ENCODE measurements at regions of chr10 and their contacts with region 1.

Region 1: GRCh38 chr10:35119378-35119777 is 7.3 kb upstream of the CREM start:
- DNase-seq: no peak
- ATAC-seq: no peak
- H3K4me3 ChIP-seq: no peak overlapping the region
- H3K27ac ChIP-seq: no peak overlapping the region
- H3K4me1 ChIP-seq: no peaks in the 10 kb centered on the region
- H3K27me3 ChIP-seq: no peaks in the 10 kb centered on the region

Region 2: DNA sequence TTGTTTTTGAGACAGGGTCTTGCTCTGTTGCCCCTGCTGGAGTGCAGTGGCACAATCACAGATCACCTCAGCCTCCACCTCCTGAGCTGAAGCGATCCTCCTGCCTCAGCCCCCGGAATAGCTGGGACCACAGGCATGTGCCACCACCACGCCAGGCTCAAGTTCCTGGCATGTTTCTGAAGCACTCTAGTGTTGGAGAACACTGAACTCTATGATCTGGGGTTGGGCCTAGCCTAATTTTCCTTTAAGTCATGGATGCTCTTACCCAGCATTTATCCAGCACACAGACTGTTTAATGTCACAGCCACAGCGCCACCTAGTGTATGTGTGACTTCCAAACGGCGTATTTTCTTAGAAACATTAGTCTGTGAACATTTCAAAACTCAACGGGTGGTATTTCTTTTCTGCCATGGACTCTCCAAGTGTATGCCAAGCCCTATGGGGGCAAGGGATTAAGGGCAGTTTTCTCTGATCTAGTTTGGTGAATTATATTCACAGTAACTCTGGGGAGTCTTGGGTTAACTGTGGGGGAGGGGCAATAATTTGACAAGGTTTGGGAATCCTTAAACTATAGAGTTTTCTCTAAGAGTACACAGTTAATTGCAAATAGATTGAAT is 99.1 kb after region 1 on chr10:
- intact Hi-C with region 1: loop called (anchors 2 to 5 kb)
- DNase-seq: peak; percentile 80 to 90 (median 85)
- ATAC-seq: peak; percentile 78 to 85
- H3K4me3 ChIP-seq: no peak overlapping the region
- H3K27ac ChIP-seq: no peak overlapping the region
- H3K4me1 ChIP-seq: no peaks in the 10 kb centered on the region
- H3K27me3 ChIP-seq: no peaks in the 10 kb centered on the region